Activated CD8-positive, alpha-beta T cell treated with anti-CD3 and anti-CD28 coated beads for 36 hours (primary cell): ENCODE measurements at regions of chr7 and their contacts with region 1.

Region 1: GRCh38 chr7:142711746-142712619 is 37.3 kb upstream of the PRSS1 start:
- DNase-seq: peak; percentile 62
- ATAC-seq: peak; percentile 90
- H3K4me3 Mint-ChIP-seq: peak overlapping the region; percentile 82
- H3K27ac Mint-ChIP-seq: peak overlapping the region; percentile 90
- H3K4me1 Mint-ChIP-seq: peaks cover 50% of the 10 kb centered on the region
- H3K27me3 Mint-ChIP-seq: no peaks in the 10 kb centered on the region
- CTCF ChIP-seq: peak; percentile 66

Region 2: DNA sequence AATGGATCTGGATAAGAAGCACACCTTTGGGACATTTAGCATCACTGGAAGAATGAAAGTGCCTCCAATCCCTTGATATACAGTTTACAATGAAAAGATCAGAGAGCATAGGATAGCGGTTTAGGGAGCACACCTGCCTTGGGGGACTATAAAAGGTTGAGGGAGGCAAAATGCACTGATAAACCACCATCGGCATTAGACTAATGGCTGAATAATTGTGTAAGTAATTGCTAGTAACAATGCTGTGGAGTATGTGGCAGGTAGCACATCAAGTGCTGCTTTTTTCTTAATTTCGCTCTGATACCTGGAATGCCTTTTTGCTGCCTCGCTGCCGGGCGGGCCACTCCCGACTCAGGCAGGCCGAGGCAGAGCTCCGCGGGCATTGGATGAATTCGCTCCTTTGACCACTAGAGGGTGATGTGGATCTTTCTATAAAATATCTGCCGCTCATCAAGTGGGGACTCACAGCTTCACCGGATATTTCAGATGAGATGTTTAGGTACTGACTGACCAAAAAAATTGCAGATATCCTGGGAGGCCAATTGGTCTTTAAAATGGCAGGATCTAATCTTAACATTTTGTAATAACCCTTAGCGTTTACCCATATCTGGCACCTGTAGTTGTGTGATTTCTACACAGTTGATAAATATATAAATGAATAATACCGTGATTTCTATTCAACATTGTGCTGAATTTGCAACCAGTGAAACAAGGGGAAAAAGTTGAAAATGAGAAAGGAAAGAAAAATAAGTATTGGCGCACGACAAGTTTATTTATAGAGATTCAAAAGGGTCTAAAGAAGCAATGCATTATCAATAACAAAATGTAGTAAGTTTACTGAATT is 79.5 kb before region 1 on chr7:
- CTCF ChIA-PET with region 1: interaction called, 10 read pairs
- POLR2A ChIA-PET with region 1: no interaction called
- intact Hi-C with region 1: no loop called
- DNase-seq: peak; percentile 65
- ATAC-seq: peak; percentile 76
- H3K4me3 Mint-ChIP-seq: no peak overlapping the region
- H3K27ac Mint-ChIP-seq: peak overlapping the region; percentile 7
- H3K4me1 Mint-ChIP-seq: peaks cover 9% of the 10 kb centered on the region
- H3K27me3 Mint-ChIP-seq: peaks cover 8% of the 10 kb centered on the region
- CTCF ChIP-seq: peak; percentile 59

Region 3: DNA sequence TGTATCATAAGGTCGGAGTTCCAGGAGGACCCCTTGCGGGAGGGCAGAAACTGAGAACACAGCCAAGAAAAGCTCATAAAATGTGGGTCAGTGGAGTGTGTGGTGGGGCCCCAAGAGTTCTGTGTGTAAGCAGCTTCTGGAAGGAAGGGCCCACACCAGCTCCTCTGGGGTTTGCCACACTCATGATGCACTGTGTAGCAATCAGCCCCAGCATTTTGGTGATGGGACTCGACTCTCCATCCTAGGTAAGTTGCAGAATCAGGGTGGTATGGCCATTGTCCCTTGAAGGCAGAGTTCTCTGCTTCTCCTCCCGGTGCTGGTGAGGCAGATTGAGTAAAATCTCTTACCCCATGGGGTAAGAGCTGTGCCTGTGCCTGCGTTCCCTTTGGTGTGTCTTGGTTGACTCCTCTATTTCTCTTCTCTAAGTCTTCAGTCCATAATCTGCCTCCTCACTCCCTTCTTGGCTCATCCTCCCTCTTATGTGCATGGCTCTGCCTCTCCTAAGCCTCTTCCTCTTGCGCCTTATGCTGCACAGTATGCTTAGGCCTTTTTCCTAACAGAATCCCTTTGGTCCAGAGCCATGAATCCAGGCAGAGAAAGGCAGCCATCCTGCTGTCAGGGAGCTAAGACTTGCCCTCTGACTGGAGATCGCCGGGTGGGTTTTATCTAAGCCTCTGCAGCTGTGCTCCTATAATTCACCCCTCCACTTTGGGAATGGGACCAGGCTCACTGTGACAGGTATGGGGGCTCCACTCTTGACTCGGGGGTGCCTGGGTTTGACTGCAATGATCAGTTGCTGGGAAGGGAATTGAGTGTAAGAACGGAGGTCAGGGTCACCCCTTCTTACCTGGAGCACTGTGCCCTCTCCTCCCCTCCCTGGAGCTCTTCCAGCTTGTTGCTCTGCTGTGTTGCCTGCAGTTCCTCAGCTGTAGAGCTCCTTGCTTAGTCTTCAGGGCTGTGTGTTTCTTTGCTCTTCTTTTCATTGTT is 76.6 kb after region 1 on chr7:
- CTCF ChIA-PET with region 1: interaction called, 30 read pairs
- POLR2A ChIA-PET with region 1: interaction called, 10 read pairs
- intact Hi-C with region 1: loop called (anchors 2 kb)
- DNase-seq: peak; percentile 17
- ATAC-seq: no peak
- H3K4me3 Mint-ChIP-seq: peak overlapping the region; percentile 100
- H3K27ac Mint-ChIP-seq: peak overlapping the region; percentile 97
- H3K4me1 Mint-ChIP-seq: peaks cover 16% of the 10 kb centered on the region
- H3K27me3 Mint-ChIP-seq: no peaks in the 10 kb centered on the region
- CTCF ChIP-seq: no peak

Region 4: GRCh38 chr7:143104832-143105241 is 392.9 kb after region 1 on chr7:
- CTCF ChIA-PET with region 1: no interaction called
- POLR2A ChIA-PET with region 1: no interaction called
- intact Hi-C with region 1: no loop called
- DNase-seq: no peak
- ATAC-seq: no peak
- H3K4me3 Mint-ChIP-seq: no peak overlapping the region
- H3K27ac Mint-ChIP-seq: no peak overlapping the region
- H3K4me1 Mint-ChIP-seq: no peaks in the 10 kb centered on the region
- H3K27me3 Mint-ChIP-seq: no peaks in the 10 kb centered on the region
- CTCF ChIP-seq: no peak